Activated CD4-positive, alpha-beta T cell treated with anti-CD3 and anti-CD28 coated beads, Interleukin-2, amount 10 ng/mL, durations not matched to agents 24 days and 14 days (primary cell): ENCODE measurements at regions of chr12 and their contacts with region 1.

Region 1: GRCh38 chr12:50211392-50212070 is 44.4 kb upstream of the CERS5 start:
- DNase-seq: no peak
- H3K4me3 Mint-ChIP-seq: peak overlapping the region; percentile 56
- H3K27ac Mint-ChIP-seq: peak overlapping the region; percentile 83
- H3K4me1 Mint-ChIP-seq: peaks cover 35% of the 10 kb centered on the region
- H3K27me3 Mint-ChIP-seq: no peaks in the 10 kb centered on the region

Region 2: DNA sequence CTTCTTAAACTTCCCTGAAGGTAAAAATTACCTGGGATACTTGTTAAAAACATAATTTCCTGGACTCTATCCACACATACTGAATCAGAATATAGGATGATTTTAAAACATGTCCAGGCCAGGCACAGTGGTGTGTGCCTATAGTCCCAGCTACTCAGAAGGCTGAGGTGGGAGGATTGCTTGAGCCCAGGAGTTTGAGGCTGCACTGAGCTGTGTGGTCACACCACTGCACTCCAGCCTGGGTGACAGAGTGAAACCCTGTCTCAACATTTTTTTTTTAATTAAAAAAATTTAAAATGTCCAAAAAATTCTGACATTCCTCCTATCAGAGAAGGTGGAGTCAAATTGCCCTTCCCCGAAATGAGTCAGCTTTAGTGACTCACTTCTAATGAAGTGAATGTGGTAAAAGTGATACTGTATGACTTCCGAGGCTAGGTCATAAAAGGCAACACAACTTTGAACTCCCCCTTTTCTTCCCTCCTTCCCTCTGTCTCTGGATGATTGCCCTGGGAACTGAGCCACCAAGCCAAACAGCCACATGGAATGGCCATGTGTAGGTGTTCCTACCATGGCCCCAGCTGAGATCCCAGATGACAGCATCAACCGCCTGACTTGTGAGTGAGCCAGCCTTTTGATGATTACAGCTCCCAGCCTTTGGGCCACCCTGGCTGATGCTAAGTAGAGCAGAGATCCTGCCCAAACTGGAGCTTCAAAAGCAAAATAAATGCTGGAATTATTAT is 35.5 kb after region 1 on chr12:
- intact Hi-C with region 1: no loop called
- DNase-seq: peak; percentile 73
- H3K4me3 Mint-ChIP-seq: peak overlapping the region; percentile 66
- H3K27ac Mint-ChIP-seq: peak overlapping the region; percentile 86
- H3K4me1 Mint-ChIP-seq: peaks cover 34% of the 10 kb centered on the region
- H3K27me3 Mint-ChIP-seq: no peaks in the 10 kb centered on the region

Region 3: GRCh38 chr12:50400598-50401364 is 189.2 kb after region 1 on chr12 and contains the start of gene LARP4:
- intact Hi-C with region 1: loop called (anchors 2 kb)
- DNase-seq: peak; percentile 98
- H3K4me3 Mint-ChIP-seq: peak within 1 kb of the TSS; percentile 99
- H3K27ac Mint-ChIP-seq: peak within 1 kb of the TSS; percentile 97
- H3K4me1 Mint-ChIP-seq: peaks cover 12% of the 10 kb centered on the region
- H3K27me3 Mint-ChIP-seq: peaks cover 6% of the 10 kb centered on the region
- total RNA-seq, gene LARP4: 117 and 130 TPM in 2 replicates